Naive thymus-derived CD4-positive, alpha-beta T cell (primary cell): ENCODE measurements at regions of chr12 and their contacts with region 1.

Region 1: GRCh38 chr12:104473374-104473983 is 16.7 kb downstream of the CHST11 start:
- DNase-seq: no peak
- ATAC-seq: peak; percentile 51
- H3K4me3 ChIP-seq: peak overlapping the region; percentile 14
- H3K4me3 Mint-ChIP-seq: peak overlapping the region; percentile 10 to 72 (median 52)
- H3K27ac ChIP-seq: no peak overlapping the region
- H3K27ac Mint-ChIP-seq: peak overlapping the region; percentile 46 to 91 (median 76)
- H3K4me1 ChIP-seq: peaks cover 44 to 59% of the 10 kb centered on the region in 2 donors
- H3K4me1 Mint-ChIP-seq: peaks cover 60 to 86% (median 82%) of the 10 kb centered on the region in 7 donors
- H3K27me3 ChIP-seq: no peaks in the 10 kb centered on the region
- H3K27me3 Mint-ChIP-seq: no peaks in the 10 kb centered on the region

Region 2: DNA sequence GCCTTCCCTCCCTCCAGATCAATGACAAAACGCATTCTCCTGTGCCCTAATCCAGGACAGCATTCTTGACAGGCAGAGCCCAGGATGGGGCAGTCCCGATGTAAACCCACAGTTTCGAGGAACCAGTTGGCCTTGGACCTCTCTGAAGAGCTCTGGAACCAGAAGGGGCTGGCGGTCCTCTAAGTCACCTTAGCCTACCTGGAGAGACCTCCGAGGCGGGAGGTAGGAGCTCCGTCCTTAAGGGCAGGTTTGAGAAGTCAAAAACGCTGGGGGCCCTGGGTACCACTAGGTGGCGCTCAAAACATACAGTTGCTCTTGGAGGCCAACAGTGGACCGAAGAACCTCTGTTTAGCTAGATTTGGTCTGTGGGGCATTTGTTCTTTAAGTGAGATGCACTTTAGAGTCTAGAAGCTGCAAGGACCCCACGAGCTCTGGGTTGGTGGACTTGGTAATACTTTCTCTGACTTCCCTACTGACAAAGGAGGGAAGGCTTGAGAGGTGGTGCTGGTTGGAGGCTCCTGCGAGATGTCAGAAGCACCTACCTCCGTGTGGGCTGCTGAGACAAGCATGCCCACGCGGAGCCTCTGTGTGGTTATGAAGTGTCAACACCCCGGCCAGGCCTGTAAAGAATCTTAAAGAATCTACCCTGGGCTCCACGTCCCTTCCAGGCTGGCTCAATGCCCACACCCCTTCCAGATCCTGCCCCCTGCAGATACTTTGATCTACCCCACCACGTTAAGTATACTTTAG is 91.6 kb before region 1 on chr12:
- CTCF ChIA-PET with region 1: no interaction called
- POLR2A ChIA-PET with region 1: no interaction called
- intact Hi-C with region 1: no loop called
- DNase-seq: peak; percentile 62 to 86 (median 74)
- ATAC-seq: peak; percentile 94
- H3K4me3 ChIP-seq: no peak overlapping the region
- H3K4me3 Mint-ChIP-seq: no peak overlapping the region
- H3K27ac ChIP-seq: no peak overlapping the region
- H3K27ac Mint-ChIP-seq: peak overlapping the region in 1 of 9 donors; percentile 17
- H3K4me1 ChIP-seq: peaks cover 0 to 6% of the 10 kb centered on the region in 2 donors
- H3K4me1 Mint-ChIP-seq: peaks cover 0 to 18% (median 6%) of the 10 kb centered on the region in 7 donors
- H3K27me3 ChIP-seq: no peaks in the 10 kb centered on the region
- H3K27me3 Mint-ChIP-seq: peaks cover 0 to 15% (median 10%) of the 10 kb centered on the region in 5 donors

Region 3: GRCh38 chr12:104485651-104486362 is 12.3 kb after region 1 on chr12:
- CTCF ChIA-PET with region 1: no interaction called
- POLR2A ChIA-PET with region 1: interaction called, 13 read pairs
- intact Hi-C with region 1: loop called (anchors 1 kb)
- DNase-seq: peak in 7 of 9 donors; percentile 58 to 78 (median 69)
- ATAC-seq: peak; percentile 80
- H3K4me3 ChIP-seq: peak overlapping the region; percentile 39
- H3K4me3 Mint-ChIP-seq: peak overlapping the region; percentile 59 to 84 (median 72)
- H3K27ac ChIP-seq: peak overlapping the region; percentile 22
- H3K27ac Mint-ChIP-seq: peak overlapping the region; percentile 73 to 93 (median 90)
- H3K4me1 ChIP-seq: peaks cover 68 to 79% of the 10 kb centered on the region in 2 donors
- H3K4me1 Mint-ChIP-seq: peaks cover 70 to 97% (median 90%) of the 10 kb centered on the region in 7 donors
- H3K27me3 ChIP-seq: no peaks in the 10 kb centered on the region
- H3K27me3 Mint-ChIP-seq: no peaks in the 10 kb centered on the region